ENCODE measurements at regions of chr6 and their contacts with region 1.

Region 1: GRCh38 chr6:36027501-36028087 is at the start of gene MAPK14:
- DNase-seq: peak; percentile 92 to 100 (median 98)
- H3K4me3 ChIP-seq: peak within 1 kb of the TSS; percentile 74 to 100 (median 95)
- H3K27ac ChIP-seq: peak within 1 kb of the TSS; percentile 51 to 98 (median 92)
- H3K27me3 ChIP-seq: peaks cover 0 to 6% (median 0%) of the 10 kb centered on the region in 45 donors
- CTCF ChIP-seq: peak; percentile 68 to 97 (median 92)
- total RNA-seq, gene MAPK14: 34.2 to 70.4 (median 48.6) TPM

Region 2: DNA sequence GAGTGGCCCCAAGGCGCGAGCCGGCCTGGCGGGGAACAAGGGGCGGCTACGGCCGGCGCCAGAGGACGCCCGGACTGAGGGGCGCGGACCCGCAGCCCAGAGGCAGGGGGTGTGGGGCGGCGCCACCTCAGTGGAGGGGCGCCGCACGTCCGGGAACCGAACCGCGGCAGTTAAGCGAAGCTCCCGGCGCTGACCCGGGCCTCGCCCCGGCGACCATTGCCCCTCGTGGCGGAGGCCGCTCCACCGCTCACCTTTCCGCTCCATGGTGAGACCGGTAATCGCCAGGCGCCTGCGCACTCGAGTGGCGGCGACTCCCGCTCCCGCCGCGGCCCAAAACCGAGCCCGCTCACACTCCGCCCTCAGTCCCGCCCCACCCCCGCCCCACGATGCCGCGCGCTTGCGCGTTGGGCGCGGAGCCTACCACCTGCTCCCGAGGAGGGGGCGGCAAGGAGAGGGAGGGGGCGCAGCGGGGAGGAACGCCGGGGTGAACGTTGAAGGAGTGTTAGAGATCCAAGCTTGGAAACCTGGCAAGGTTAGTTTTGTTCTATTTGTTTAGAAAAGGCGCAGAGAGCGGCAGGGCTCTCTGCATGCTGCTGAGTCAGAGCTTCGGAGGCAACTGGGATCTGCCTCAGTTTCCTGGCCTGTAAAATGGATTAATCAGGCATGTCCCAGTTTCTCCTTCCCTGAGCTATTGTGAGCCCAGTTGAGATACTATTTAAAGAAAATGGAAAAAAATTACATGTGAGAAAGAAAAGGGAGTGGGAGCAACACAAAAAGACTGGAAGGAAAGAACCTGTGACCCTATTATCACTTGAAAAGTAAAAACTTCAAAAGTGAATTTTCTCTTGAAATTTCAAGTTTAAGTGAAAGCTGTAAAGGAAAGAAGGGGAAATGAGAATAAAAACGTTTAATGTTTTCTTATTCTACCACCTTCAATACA is 106.5 kb before region 1 on chr6 and contains the start of gene SRPK1:
- intact Hi-C with region 1: loop called in 1 of 2 experiments (anchors 2 kb)
- DNase-seq: peak; percentile 75 to 93 (median 85)
- H3K4me3 ChIP-seq: peak within 1 kb of the TSS; percentile 56 to 98 (median 85)
- H3K27ac ChIP-seq: peak within 1 kb of the TSS in 58 of 59 donors; percentile 15 to 92 (median 78)
- H3K27me3 ChIP-seq: no peaks in the 10 kb centered on the region
- CTCF ChIP-seq: peak in 19 of 56 donors; percentile 8 to 40 (median 24)
- total RNA-seq, gene SRPK1: 32.2 to 80.3 (median 53.7) TPM

Region 3: GRCh38 chr6:36094753-36095496 is 67.3 kb after region 1 on chr6:
- intact Hi-C with region 1: loop called (anchors 1 to 2 kb)
- DNase-seq: peak; percentile 75 to 89 (median 82)
- H3K4me3 ChIP-seq: peak overlapping the region in 10 of 59 donors; percentile 3 to 34 (median 17)
- H3K27ac ChIP-seq: peak overlapping the region in 19 of 59 donors; percentile 0 to 71 (median 29)
- H3K27me3 ChIP-seq: no peaks in the 10 kb centered on the region
- CTCF ChIP-seq: peak; percentile 93 to 99 (median 98)

Region 4: GRCh38 chr6:36123257-36124139 is 95.9 kb after region 1 on chr6:
- intact Hi-C with region 1: no loop called
- DNase-seq: peak in 9 of 10 donors; percentile 44 to 86 (median 74)
- H3K4me3 ChIP-seq: peak overlapping the region in 1 of 59 donors; percentile 9
- H3K27ac ChIP-seq: peak overlapping the region in 23 of 59 donors; percentile 2 to 69 (median 39)
- H3K27me3 ChIP-seq: no peaks in the 10 kb centered on the region
- CTCF ChIP-seq: peak in 54 of 56 donors; percentile 35 to 76 (median 62)

Region 5: GRCh38 chr6:36153972-36154723 is 126.6 kb after region 1 on chr6:
- intact Hi-C with region 1: no loop called
- DNase-seq: no peak
- H3K4me3 ChIP-seq: no peak overlapping the region
- H3K27ac ChIP-seq: no peak overlapping the region
- H3K27me3 ChIP-seq: no peaks in the 10 kb centered on the region
- CTCF ChIP-seq: no peak

Region 6: GRCh38 chr6:36196880-36197548 is 169.4 kb after region 1 on chr6:
- intact Hi-C with region 1: loop called (anchors 1 to 5 kb)
- DNase-seq: peak; percentile 99 to 100 (median 99)
- H3K4me3 ChIP-seq: peak overlapping the region; percentile 45 to 81 (median 69)
- H3K27ac ChIP-seq: peak overlapping the region; percentile 71 to 98 (median 95)
- H3K27me3 ChIP-seq: no peaks in the 10 kb centered on the region
- CTCF ChIP-seq: peak in 3 of 56 donors; percentile 10 to 14 (median 14)

Region 7: GRCh38 chr6:36360241-36361054 is 332.9 kb after region 1 on chr6:
- intact Hi-C with region 1: loop called in 1 of 2 experiments (anchors 5 kb)
- DNase-seq: peak; percentile 67 to 91 (median 83)
- H3K4me3 ChIP-seq: peak overlapping the region in 10 of 59 donors; percentile 0 to 33 (median 12)
- H3K27ac ChIP-seq: peak overlapping the region; percentile 8 to 98 (median 78)
- H3K27me3 ChIP-seq: no peaks in the 10 kb centered on the region
- CTCF ChIP-seq: peak; percentile 61 to 97 (median 89)

Region 8: GRCh38 chr6:36594029-36594815 is 566.6 kb after region 1 on chr6 and contains the start of gene SRSF3:
- intact Hi-C with region 1: loop called in 1 of 2 experiments (anchors 5 kb)
- DNase-seq: peak; percentile 90 to 98 (median 97)
- H3K4me3 ChIP-seq: peak within 1 kb of the TSS; percentile 53 to 99 (median 91)
- H3K27ac ChIP-seq: peak within 1 kb of the TSS; percentile 88 to 100 (median 99)
- H3K27me3 ChIP-seq: no peaks in the 10 kb centered on the region
- CTCF ChIP-seq: peak in 55 of 56 donors; percentile 22 to 78 (median 62)
- total RNA-seq, gene SRSF3: 108 to 194 (median 145) TPM

Measured in dorsolateral prefrontal cortex (tissue), 120 donors.